ENCODE measurements at regions of chr14 and their contacts with region 1.

Region 1: GRCh38 chr14:93655078-93655750 is 133.1 kb downstream of the PRIMA1 start:
- DNase-seq: no peak
- ATAC-seq: peak in 2 of 4 donors; percentile 41 to 61
- H3K4me3 ChIP-seq: no peak overlapping the region
- H3K27ac ChIP-seq: no peak overlapping the region
- H3K4me1 ChIP-seq: no peaks in the 10 kb centered on the region
- H3K27me3 ChIP-seq: no peaks in the 10 kb centered on the region
- CTCF ChIP-seq: peak; percentile 65

Region 2: GRCh38 chr14:93788543-93789227 is 133.5 kb after region 1 on chr14:
- intact Hi-C with region 1: loop called (anchors 2 to 10 kb)
- DNase-seq: peak in 1 of 2 donors; percentile 49
- ATAC-seq: peak; percentile 79 to 93 (median 85)
- H3K4me3 ChIP-seq: peak overlapping the region; percentile 66
- H3K27ac ChIP-seq: no peak overlapping the region
- H3K4me1 ChIP-seq: no peaks in the 10 kb centered on the region
- H3K27me3 ChIP-seq: peaks cover 0 to 15% (median 0%) of the 10 kb centered on the region in 3 donors
- CTCF ChIP-seq: peak; percentile 44

Region 3: GRCh38 chr14:93892923-93893558 is 237.8 kb after region 1 on chr14:
- intact Hi-C with region 1: loop called (anchors 2 kb)
- DNase-seq: peak; percentile 76 to 82
- ATAC-seq: peak; percentile 69 to 83 (median 76)
- H3K4me3 ChIP-seq: no peak overlapping the region
- H3K27ac ChIP-seq: no peak overlapping the region
- H3K4me1 ChIP-seq: no peaks in the 10 kb centered on the region
- H3K27me3 ChIP-seq: peaks cover 0 to 1% (median 0%) of the 10 kb centered on the region in 3 donors
- CTCF ChIP-seq: peak; percentile 99

Region 4: GRCh38 chr14:94026173-94026888 is 371.1 kb after region 1 on chr14 and contains the start of gene OTUB2:
- intact Hi-C with region 1: loop called in 1 of 2 experiments (anchors 10 kb)
- DNase-seq: peak; percentile 98 to 99
- ATAC-seq: peak; percentile 98 to 100 (median 100)
- H3K4me3 ChIP-seq: peak within 1 kb of the TSS; percentile 79
- H3K27ac ChIP-seq: no peak within 1 kb of the TSS
- H3K4me1 ChIP-seq: no peaks in the 10 kb centered on the region
- H3K27me3 ChIP-seq: no peaks in the 10 kb centered on the region
- CTCF ChIP-seq: no peak
- total RNA-seq, gene OTUB2: 0.06 to 0.15 (median 0.10) TPM

Measured in psoas muscle (tissue), 8 donors.